ENCODE measurements at regions of chr2 and their contacts with region 1.

Region 1: DNA sequence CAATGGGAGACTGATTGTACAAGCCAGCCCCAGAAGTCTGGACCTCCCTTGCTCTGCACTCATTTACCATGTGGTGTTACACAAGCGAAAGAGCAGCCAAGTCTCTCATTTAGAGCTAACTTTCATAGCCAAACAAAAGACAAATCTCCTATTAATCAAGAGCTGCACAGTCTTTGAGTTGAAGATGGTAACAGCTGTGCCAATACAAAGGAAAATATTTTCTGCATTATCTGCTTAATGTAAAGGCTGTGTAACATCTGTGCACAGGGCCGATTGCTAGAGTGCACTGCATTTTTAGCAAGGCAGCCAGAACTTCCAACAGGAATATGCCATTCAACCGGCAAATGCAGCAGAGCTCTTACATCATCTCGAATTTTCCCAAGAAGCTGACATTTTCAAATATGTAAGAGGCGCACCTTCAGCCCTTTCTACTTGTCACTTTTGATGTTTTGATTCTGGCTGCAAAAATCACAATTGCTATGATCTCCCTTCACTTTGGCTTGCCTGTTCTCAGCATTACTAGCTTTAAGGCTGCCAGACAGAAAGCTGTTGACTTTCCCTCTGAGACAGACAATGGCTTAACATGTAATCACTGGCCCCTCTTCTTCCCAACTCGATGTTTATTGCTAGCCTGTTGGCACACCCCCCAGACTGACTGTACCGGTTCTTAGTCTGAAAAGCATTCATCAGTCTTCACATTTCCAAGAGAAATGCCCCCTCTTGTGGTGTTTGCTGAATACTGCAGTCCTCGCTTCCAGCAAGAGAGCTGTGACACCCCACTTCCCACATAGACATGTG is 96.9 kb upstream of the TANK start:
- DNase-seq: peak; percentile 78
- H3K4me3 Mint-ChIP-seq: no peak overlapping the region
- H3K27ac Mint-ChIP-seq: no peak overlapping the region
- H3K4me1 Mint-ChIP-seq: peaks cover 12% of the 10 kb centered on the region
- H3K27me3 Mint-ChIP-seq: peaks cover 8% of the 10 kb centered on the region

Region 2: GRCh38 chr2:160994141-160995002 is 69.0 kb before region 1 on chr2:
- CTCF ChIA-PET with region 1: interaction called, 28 read pairs
- DNase-seq: peak; percentile 77
- H3K4me3 Mint-ChIP-seq: no peak overlapping the region
- H3K27ac Mint-ChIP-seq: no peak overlapping the region
- H3K4me1 Mint-ChIP-seq: peaks cover 7% of the 10 kb centered on the region
- H3K27me3 Mint-ChIP-seq: no peaks in the 10 kb centered on the region

Region 3: DNA sequence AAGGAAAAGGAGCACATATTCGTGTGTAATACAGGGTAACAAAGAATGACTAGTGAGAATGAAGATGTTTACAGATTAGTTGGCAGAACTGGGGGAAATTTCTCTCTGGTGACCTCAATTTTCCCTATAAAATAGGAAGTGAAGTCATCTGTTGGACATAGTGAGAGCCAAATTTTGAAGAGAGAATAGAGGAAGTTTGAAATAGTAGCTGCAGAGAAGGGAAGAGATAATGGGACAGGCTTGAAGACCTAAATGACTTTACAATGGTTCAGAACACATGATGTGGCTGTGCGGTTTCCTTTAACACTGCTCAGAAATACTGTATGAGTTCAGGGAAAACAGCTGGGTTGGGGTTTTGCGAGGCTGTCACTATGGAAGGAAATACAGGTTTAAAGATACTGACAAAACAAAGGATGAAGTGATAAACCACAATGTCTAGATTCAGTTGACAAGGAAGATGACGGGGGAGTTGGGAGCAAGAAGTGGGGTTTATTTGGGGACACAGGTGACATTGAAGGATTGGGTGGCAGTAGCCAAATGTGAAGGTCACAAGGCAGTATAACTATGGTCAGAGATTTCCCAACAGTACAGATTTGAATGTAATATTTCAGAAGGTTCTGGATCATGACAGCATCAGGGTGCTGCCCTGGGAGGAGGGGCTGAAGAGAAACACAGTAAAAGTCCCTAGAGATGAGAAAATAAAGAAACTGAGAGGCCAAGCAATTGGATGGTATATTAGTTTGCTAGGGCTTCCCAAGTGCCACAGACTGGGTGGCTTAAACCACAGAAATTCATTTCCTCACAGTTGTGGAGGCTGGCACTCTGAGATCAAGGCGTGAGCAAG is 14.2 kb after region 1 on chr2:
- CTCF ChIA-PET with region 1: interaction called, 22 read pairs
- DNase-seq: peak; percentile 87
- H3K4me3 Mint-ChIP-seq: peak overlapping the region; percentile 29
- H3K27ac Mint-ChIP-seq: peak overlapping the region; percentile 93
- H3K4me1 Mint-ChIP-seq: peaks cover 50% of the 10 kb centered on the region
- H3K27me3 Mint-ChIP-seq: no peaks in the 10 kb centered on the region

Region 4: GRCh38 chr2:161139098-161139987 is 76.0 kb after region 1 on chr2:
- CTCF ChIA-PET with region 1: interaction called, 10 read pairs
- DNase-seq: no peak
- H3K4me3 Mint-ChIP-seq: peak overlapping the region; percentile 62
- H3K27ac Mint-ChIP-seq: peak overlapping the region; percentile 75
- H3K4me1 Mint-ChIP-seq: peaks cover 71% of the 10 kb centered on the region
- H3K27me3 Mint-ChIP-seq: no peaks in the 10 kb centered on the region

Region 5: DNA sequence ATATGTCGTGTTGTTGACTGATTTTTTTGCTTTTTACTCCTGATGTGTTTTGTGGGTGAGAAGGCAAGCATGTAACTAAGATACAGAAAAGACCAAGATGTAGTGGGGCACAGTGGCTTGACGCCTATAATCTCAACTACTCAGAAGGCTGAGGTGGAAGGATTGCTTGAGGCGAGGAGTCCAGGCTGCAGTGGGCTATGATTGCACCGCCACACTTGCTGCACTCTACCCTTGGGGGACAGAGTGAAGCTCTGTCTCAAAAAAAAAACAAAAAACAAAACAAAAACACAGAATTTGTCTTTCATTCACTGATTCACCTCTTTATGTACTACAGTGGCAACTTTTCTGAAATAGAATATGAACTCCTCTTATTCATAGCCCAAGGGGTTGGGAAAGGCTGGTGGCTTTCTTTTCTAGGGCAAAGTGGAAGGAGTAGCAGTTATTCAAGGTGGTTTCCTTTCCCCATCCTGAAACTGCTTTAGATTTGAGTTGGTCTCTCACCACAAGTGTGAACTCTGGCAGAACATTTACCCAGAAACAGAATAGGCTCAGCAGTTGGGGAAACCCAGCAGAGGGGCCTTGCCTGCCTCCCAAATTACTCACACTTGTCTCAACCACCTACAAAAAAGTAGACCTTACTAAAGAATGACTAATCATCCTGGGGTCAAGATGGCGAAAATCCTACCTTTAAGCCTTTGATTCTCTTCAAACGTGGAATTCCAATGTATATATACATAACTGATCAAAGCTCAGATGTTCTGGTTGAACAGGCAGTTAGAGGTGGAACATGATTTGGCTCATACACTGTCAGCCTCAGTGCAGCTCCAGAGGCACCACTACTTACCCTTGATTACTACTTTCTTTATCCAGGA is 103.4 kb after region 1 on chr2:
- CTCF ChIA-PET with region 1: no interaction called
- DNase-seq: peak; percentile 57
- H3K4me3 Mint-ChIP-seq: no peak overlapping the region
- H3K27ac Mint-ChIP-seq: peak overlapping the region; percentile 87
- H3K4me1 Mint-ChIP-seq: peaks cover 83% of the 10 kb centered on the region
- H3K27me3 Mint-ChIP-seq: no peaks in the 10 kb centered on the region

Region 6: DNA sequence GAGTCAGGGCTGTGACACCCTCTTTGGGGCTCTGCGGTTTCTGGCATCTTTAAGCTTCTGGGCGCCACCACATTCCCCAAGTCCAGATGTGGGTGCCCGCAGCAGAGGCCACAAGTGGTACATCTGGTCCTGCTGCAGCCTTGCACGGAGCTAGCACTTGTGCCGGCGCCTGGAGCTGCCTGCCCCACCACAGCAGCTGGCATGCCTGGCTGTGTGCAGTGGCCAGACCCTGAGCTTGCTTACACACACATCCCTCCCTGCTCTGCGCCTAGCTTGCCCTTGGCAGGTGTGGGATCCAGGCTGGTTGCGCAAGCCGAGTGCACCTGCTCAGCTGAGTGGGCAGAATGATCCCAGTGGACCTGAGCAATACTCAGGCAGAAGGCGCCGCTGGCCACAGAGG is 588.2 kb after region 1 on chr2:
- CTCF ChIA-PET with region 1: no interaction called
- DNase-seq: no peak
- H3K4me3 Mint-ChIP-seq: no peak overlapping the region
- H3K27ac Mint-ChIP-seq: no peak overlapping the region
- H3K4me1 Mint-ChIP-seq: no peaks in the 10 kb centered on the region
- H3K27me3 Mint-ChIP-seq: no peaks in the 10 kb centered on the region

Measured in activated naive CD4-positive, alpha-beta T cell treated with anti-CD3 and anti-CD28 coated beads, Interleukin-2, amount 10 ng/mL, durations not matched to agents 7 days and 5 days (primary cell).